ENCODE measurements at regions of chr12 and their contacts with region 1.

Region 1: GRCh38 chr12:120265473-120266179 is at the start of gene PXN:
- DNase-seq: peak; percentile 88
- ATAC-seq: peak; percentile 84
- H3K4me3 Mint-ChIP-seq: peak within 1 kb of the TSS; percentile 83
- H3K27ac Mint-ChIP-seq: peak within 1 kb of the TSS; percentile 85
- H3K4me1 Mint-ChIP-seq: peaks cover 49% of the 10 kb centered on the region
- H3K27me3 Mint-ChIP-seq: no peaks in the 10 kb centered on the region
- CTCF ChIP-seq: peak; percentile 78
- total RNA-seq, gene PXN: 96.6 to 132 TPM (median 99.2 TPM) in 3 replicates

Region 2: DNA sequence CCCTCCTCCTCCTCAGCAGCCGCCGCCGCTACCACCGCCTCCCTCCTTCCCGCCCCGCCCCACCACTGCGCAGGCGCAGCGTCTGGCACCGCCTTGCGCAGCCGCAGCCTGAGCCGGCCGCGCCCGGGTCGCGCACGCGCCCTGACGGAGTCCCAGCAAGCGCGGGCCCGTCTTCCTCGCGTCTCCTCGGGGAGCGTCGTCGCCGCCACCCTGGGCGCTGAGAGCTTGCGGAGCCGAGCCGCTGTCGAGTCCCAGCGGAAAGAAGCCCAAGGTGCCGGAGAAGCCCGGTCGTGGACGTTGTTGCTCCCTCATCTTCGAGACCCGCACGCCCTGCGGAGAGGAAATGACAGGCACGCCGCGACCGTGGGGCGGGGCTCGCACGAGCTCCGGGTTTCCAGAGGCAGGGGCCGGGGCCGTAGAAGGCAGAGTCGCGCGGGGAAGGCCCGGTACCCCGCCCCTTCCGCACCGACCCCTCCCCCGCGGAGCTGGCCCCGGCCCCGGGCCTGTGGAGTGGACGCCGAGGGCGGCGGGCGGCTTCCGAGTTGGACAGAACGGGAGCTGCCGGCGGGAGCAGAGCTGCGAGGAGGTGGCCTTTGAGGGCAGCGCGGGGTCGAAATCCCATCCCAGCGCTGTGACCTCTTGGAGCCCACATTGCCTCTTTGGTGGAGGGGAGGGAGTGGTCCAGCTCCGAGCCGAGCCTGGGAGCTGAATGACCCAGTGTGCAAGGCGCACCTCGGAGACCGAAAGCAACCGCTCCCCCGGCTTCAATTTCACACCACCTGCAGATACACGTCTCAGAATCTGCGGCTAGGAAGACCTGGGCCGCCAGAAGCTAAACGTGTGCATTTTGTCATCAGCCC is 148.6 kb before region 1 on chr12:
- CTCF ChIA-PET with region 1: interaction called, 11 read pairs
- POLR2A ChIA-PET with region 1: interaction called, 3 read pairs
- DNase-seq: peak; percentile 98
- ATAC-seq: peak; percentile 83
- H3K4me3 Mint-ChIP-seq: peak overlapping the region; percentile 82
- H3K27ac Mint-ChIP-seq: peak overlapping the region; percentile 89
- H3K4me1 Mint-ChIP-seq: peaks cover 31% of the 10 kb centered on the region
- H3K27me3 Mint-ChIP-seq: no peaks in the 10 kb centered on the region; the same call in 1 of the 2 replicates
- CTCF ChIP-seq: no peak

Region 3: DNA sequence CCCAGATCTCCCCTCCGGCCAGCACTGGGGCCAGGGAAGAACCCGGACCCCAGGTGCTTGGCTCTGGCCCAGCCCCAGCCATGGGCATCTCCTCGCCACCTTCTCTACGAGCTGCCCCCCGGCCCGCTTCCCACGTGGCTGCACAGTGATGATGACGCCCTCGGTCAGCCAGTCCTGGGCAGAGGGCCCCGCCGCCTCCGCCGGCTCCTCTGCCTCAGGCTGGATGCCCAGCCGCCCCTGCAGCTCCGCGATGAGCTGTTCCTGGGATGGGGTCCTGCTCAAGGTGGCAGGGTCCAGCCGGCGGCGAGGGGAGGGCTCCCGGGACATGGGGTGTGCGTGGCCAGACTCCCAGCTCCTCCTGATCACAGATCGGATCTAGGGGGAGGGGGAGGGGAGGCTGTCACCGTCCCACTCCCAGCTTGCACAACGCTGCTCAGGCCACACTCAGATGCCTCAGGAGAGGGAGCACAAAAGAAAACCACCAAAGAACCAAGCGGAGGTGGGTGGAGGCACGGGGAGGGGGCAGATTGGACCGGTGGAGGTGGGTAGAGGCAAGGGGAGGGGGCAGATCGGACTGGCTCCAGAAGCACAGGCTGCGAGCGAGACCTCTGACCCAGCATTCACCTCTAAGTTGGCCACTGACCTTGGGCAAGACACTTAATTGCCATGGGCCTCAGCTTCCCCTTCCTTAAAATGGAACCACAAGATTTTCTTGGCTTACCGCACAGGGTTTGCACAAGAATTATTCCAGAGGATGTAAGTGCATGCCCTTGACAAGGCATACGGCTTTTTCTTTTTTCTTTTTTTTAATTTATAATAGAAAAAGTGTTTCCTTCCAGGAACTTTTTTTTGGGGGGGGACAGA is 48.7 kb before region 1 on chr12:
- CTCF ChIA-PET with region 1: interaction called, 10 read pairs
- POLR2A ChIA-PET with region 1: interaction called, 5 read pairs
- DNase-seq: no peak
- ATAC-seq: peak; percentile 7
- H3K4me3 Mint-ChIP-seq: no peak overlapping the region
- H3K27ac Mint-ChIP-seq: no peak overlapping the region
- H3K4me1 Mint-ChIP-seq: peaks cover 8% of the 10 kb centered on the region
- H3K27me3 Mint-ChIP-seq: no peaks in the 10 kb centered on the region
- CTCF ChIP-seq: no peak

Region 4: GRCh38 chr12:120286796-120287465 is 21.3 kb after region 1 on chr12:
- CTCF ChIA-PET with region 1: interaction called, 29 read pairs
- POLR2A ChIA-PET with region 1: interaction called, 34 read pairs
- DNase-seq: no peak
- ATAC-seq: no peak
- H3K4me3 Mint-ChIP-seq: no peak overlapping the region
- H3K27ac Mint-ChIP-seq: no peak overlapping the region
- H3K4me1 Mint-ChIP-seq: peaks cover 20% of the 10 kb centered on the region
- H3K27me3 Mint-ChIP-seq: no peaks in the 10 kb centered on the region; the same call in 1 of the 2 replicates
- CTCF ChIP-seq: no peak

Region 5: GRCh38 chr12:120301962-120302815 is 36.6 kb after region 1 on chr12 and contains the start of gene SIRT4:
- CTCF ChIA-PET with region 1: interaction called, 15 read pairs
- POLR2A ChIA-PET with region 1: interaction called, 3 read pairs
- DNase-seq: peak; percentile 89
- ATAC-seq: peak; percentile 95
- H3K4me3 Mint-ChIP-seq: peak within 1 kb of the TSS; percentile 95
- H3K27ac Mint-ChIP-seq: peak within 1 kb of the TSS; percentile 91
- H3K4me1 Mint-ChIP-seq: peaks cover 6% of the 10 kb centered on the region; the same call in 1 of the 2 replicates
- H3K27me3 Mint-ChIP-seq: peaks cover 3% of the 10 kb centered on the region; the same call in 1 of the 2 replicates
- CTCF ChIP-seq: peak; percentile 52; the same call in 1 of the 2 replicates
- total RNA-seq, gene SIRT4: 2.1 to 4.3 TPM (median 2.8 TPM) in 3 replicates